Activated CD4-positive, alpha-beta T cell treated with anti-CD3 and anti-CD28 coated beads for 36 hours (primary cell): ENCODE measurements at regions of chr6 and their contacts with region 1.

Region 1: DNA sequence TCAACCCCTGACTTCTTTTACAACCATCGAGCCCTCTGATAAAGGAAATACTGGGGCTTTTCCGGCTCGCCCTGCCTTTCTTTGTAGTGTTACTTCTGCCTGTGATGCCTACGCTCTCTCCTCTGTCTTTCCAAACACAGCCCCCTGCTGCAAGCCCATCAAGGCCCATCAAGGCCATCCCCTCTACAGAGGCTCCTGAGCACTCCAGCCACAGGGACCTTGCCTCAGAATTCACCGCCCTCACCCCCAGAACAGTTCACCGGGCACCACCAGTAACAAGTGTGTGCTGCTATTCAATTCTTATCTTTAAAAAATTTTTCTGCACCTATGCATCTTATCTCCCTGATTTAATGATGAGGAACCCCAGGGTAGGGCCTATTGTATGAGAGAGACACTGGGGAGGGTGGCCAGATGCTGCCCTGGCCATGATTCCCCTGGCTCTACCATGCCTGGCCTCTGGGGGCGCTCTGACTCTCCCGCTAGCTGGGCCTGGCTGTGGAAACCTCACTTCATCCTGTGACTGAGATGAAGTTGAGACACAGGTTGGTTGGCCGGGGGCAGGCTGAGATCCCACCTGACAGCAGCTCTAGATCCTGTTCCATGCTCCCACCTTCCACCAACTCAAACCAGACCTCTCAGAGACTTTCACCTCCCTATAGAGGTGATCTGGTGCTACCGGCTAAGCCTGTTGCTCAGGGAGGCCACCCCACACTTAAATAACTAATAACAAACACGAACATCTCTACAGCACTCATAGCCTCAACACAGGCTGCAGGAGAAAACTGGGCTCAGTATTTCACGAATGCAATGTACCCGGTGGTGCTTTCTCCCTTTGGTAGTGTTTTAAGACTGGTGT is 19.2 kb upstream of the GLP1R start:
- DNase-seq: peak; percentile 80
- ATAC-seq: peak; percentile 92
- H3K4me3 Mint-ChIP-seq: no peak overlapping the region
- H3K27ac Mint-ChIP-seq: no peak overlapping the region
- H3K4me1 Mint-ChIP-seq: no peaks in the 10 kb centered on the region
- H3K27me3 Mint-ChIP-seq: peaks cover 32% of the 10 kb centered on the region

Region 2: DNA sequence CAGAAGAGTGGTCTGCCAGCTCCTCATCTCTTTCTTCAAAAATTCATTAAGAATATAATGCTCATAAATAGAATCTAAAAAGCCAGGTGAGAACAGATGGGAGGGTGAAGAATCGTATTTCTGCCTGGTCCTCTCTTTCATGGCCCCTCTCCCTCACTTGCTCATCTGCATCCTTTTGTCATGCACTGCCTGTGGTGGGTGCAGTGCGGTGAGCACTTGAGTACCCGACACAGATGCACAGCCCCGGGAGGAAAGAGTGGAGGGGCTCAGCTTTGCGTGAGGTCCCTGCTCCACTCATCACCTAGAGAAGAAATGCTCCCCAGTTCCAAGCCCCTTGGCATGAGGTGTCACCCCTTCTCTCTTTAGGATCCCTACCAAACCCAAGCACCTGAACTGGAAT is 38.9 kb before region 1 on chr6:
- CTCF ChIA-PET with region 1: no interaction called
- POLR2A ChIA-PET with region 1: no interaction called
- intact Hi-C with region 1: no loop called
- DNase-seq: no peak
- ATAC-seq: no peak
- H3K4me3 Mint-ChIP-seq: no peak overlapping the region
- H3K27ac Mint-ChIP-seq: no peak overlapping the region
- H3K4me1 Mint-ChIP-seq: no peaks in the 10 kb centered on the region
- H3K27me3 Mint-ChIP-seq: peaks cover 6% of the 10 kb centered on the region

Region 3: GRCh38 chr6:39062014-39062740 is 32.8 kb after region 1 on chr6:
- CTCF ChIA-PET with region 1: interaction called, 12 read pairs
- POLR2A ChIA-PET with region 1: no interaction called
- intact Hi-C with region 1: no loop called
- DNase-seq: no peak
- ATAC-seq: no peak
- H3K4me3 Mint-ChIP-seq: no peak overlapping the region
- H3K27ac Mint-ChIP-seq: no peak overlapping the region
- H3K4me1 Mint-ChIP-seq: no peaks in the 10 kb centered on the region
- H3K27me3 Mint-ChIP-seq: peaks cover 7% of the 10 kb centered on the region

Region 4: GRCh38 chr6:39072850-39073249 is 43.5 kb after region 1 on chr6:
- CTCF ChIA-PET with region 1: no interaction called
- POLR2A ChIA-PET with region 1: no interaction called
- intact Hi-C with region 1: no loop called
- DNase-seq: no peak
- ATAC-seq: no peak
- H3K4me3 Mint-ChIP-seq: no peak overlapping the region
- H3K27ac Mint-ChIP-seq: no peak overlapping the region
- H3K4me1 Mint-ChIP-seq: peaks cover 6% of the 10 kb centered on the region
- H3K27me3 Mint-ChIP-seq: peaks cover 3% of the 10 kb centered on the region

Region 5: DNA sequence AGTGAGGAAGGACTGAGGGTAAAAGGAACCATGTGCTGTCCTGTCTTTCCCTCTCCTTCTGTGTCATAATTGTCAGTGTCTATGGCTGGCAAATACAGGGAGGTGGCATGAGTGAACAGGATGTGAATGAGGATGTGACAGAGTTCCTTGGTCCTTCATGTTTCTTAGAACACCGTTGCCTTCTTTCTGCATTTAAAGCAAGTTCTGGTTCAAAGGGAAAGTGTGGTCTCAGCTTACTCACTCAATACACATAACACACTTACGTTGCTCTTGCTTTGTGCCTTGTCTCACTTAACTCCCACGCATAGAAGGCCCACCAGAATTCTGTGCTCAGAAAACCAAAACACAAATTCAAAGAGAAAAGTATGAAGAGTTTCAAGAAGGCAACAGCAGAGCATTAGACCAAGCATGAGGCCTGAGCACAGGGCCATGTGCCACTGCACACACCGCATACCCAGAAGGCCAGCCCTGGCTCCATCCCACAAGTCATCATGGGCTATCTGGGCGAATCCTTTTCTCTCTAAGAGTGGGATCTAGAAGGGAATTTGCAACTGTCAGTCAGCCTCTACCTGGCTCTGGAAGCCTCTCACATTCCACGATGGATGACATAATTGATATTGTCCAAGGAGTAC is 124.5 kb after region 1 on chr6:
- CTCF ChIA-PET with region 1: no interaction called
- POLR2A ChIA-PET with region 1: no interaction called
- intact Hi-C with region 1: loop called in 1 of 2 experiments (anchors 5 kb)
- DNase-seq: peak; percentile 63
- ATAC-seq: peak; percentile 94
- H3K4me3 Mint-ChIP-seq: no peak overlapping the region
- H3K27ac Mint-ChIP-seq: peak overlapping the region; percentile 84
- H3K4me1 Mint-ChIP-seq: peaks cover 52% of the 10 kb centered on the region
- H3K27me3 Mint-ChIP-seq: peaks cover 10% of the 10 kb centered on the region

Region 6: DNA sequence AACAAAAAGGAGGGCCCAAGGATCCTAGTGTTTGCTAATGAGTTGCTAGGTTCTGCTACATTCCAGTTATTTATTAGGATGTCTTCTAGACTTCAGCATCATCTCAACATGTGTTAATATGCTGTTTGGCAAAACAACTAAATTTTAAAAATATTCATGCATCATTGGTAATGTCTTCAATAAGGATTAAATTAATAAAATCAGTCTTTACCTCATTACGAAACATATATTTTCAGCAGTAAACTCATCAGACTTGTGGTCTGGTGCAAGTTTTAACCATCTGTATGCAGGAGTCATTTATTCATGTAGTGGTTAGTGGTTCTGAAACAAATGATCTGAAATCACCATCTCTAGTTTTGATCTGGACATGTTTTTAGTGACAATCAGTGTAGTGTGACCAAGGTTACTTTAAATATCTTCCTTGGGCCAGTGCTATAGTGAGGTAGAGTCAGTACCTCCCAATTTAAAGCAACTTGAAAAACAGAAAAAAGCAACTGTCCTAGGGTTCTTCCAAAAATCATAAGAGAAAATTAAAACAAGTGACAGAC is 378.1 kb after region 1 on chr6:
- CTCF ChIA-PET with region 1: no interaction called
- POLR2A ChIA-PET with region 1: no interaction called
- intact Hi-C with region 1: no loop called
- DNase-seq: no peak
- ATAC-seq: no peak
- H3K4me3 Mint-ChIP-seq: no peak overlapping the region
- H3K27ac Mint-ChIP-seq: no peak overlapping the region
- H3K4me1 Mint-ChIP-seq: no peaks in the 10 kb centered on the region
- H3K27me3 Mint-ChIP-seq: no peaks in the 10 kb centered on the region